MCF 10A (cell line): ENCODE measurements at regions of chr4 and their contacts with region 1.

Region 1: DNA sequence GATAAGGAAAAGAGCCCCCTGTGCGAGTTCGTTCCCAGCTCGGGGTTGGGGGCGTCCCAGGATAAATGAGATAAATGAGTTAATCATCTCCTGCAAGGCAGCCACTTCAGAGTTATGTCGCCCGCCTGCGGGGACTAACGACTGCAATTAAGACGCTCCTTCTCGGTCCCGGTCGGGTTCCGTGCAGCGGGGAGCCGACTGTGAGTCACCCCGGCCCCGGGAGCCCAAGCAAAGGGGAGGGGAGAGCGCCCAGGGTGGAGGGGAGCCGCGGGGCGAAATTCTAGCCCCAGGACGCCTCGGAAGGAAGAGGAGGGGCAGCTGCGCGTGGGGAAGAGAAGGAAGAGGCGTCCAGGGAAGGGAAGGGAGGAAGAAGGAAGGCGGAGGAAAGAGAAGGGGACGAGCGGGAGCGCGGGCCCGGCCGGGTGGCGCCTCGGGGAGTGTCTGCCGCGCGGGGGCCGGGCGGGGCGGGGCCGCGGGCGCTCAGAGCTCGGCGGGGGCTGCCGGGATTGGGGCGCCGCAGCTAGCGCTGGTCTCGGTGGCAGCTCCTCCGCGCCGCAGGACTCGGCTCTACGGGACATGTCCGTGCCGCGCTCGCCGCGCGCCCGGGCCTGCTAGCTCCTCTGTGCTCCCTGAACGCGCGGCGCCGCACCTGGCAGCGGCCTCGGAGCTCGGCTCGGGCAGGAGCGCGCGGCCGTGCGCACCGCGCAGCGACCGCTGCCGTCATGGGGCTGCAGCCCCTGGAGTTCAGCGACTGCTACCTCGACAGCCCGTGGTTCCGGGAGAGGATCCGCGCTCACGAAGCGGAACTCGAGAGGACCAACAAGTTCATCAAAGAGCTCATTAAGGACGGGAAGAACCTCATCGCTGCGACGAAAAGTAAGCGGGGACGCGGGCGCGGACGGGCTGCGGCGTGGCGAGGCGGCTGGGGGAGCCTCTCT is at the start of gene ARHGAP10:
- DNase-seq: peak; percentile 85
- H3K4me3 Mint-ChIP-seq: peak within 1 kb of the TSS; percentile 86
- H3K27ac Mint-ChIP-seq: peak within 1 kb of the TSS; percentile 50
- H3K4me1 Mint-ChIP-seq: peaks cover 40% of the 10 kb centered on the region
- H3K27me3 Mint-ChIP-seq: no peaks in the 10 kb centered on the region
- CTCF ChIP-seq: no peak
- total RNA-seq, gene ARHGAP10: 22.4 and 24.6 TPM in 2 replicates

Region 2: GRCh38 chr4:147425019-147425418 is 306.8 kb before region 1 on chr4:
- CTCF ChIA-PET with region 1: no interaction called
- POLR2A ChIA-PET with region 1: no interaction called
- intact Hi-C with region 1: no loop called
- DNase-seq: no peak
- H3K4me3 Mint-ChIP-seq: no peak overlapping the region
- H3K27ac Mint-ChIP-seq: no peak overlapping the region
- H3K4me1 Mint-ChIP-seq: peaks cover 10% of the 10 kb centered on the region
- H3K27me3 Mint-ChIP-seq: no peaks in the 10 kb centered on the region
- CTCF ChIP-seq: no peak

Region 3: DNA sequence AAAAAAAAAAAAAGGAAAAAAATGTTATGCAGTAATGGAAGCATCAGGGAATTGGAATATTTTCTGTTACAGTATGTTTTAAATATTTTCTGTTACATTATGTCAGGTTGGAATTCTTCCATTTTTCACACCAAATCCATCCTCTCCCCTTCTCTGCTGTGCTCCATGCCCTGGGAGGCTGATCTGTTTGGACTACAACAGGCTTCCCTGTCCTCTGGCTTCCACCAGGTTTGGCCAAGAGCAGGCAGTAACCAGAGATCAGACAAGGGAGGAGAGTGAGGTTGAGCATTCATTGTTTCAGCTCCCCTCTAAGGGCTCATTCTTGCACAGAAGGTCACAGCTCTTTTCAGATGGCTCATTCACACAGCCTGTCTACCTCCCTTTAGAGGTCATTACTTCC is 126.3 kb before region 1 on chr4:
- CTCF ChIA-PET with region 1: no interaction called
- POLR2A ChIA-PET with region 1: no interaction called
- intact Hi-C with region 1: no loop called
- DNase-seq: no peak
- H3K4me3 Mint-ChIP-seq: no peak overlapping the region
- H3K27ac Mint-ChIP-seq: no peak overlapping the region
- H3K4me1 Mint-ChIP-seq: no peaks in the 10 kb centered on the region
- H3K27me3 Mint-ChIP-seq: no peaks in the 10 kb centered on the region
- CTCF ChIP-seq: no peak

Region 4: DNA sequence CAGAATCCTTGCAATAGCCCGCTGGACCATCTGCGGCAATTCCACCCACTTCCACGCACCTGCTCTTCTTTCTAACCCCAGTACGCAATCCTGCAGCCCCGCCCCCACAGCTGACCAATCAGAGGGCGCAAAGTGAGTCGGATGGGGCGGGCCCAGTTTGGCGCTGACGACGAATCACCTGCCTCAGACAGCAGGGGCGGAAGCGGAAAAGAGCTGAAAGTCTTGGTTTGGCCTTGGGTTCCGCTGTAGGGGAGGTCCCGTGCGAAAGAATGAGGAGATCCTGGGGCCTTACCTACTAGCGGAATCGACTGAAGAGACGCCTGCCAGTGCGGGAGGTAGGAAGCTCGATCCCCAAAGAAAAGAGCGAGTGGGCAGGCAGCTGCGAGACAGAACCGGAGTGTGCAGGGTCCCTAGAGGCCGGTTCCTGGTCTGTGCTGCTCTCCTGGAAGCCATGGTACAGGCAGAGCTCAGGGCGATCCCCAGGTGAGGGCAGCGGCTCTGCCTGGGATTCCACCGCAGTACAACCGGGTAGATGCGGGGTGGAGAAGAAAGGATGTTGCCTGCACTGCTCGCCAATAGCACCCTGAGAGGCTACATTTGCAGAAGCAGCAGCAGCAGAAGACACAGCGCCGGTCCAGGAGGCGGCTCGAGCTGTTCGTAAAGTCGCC is 114.5 kb before region 1 on chr4 and contains the start of gene TMEM184C:
- CTCF ChIA-PET with region 1: no interaction called
- POLR2A ChIA-PET with region 1: interaction called, 12 read pairs
- intact Hi-C with region 1: no loop called
- DNase-seq: peak; percentile 98
- H3K4me3 Mint-ChIP-seq: peak within 1 kb of the TSS; percentile 82
- H3K27ac Mint-ChIP-seq: peak within 1 kb of the TSS; percentile 86
- H3K4me1 Mint-ChIP-seq: peaks cover 18% of the 10 kb centered on the region
- H3K27me3 Mint-ChIP-seq: no peaks in the 10 kb centered on the region
- CTCF ChIP-seq: no peak
- total RNA-seq, gene TMEM184C: 33.9 and 37.1 TPM in 2 replicates

Region 5: DNA sequence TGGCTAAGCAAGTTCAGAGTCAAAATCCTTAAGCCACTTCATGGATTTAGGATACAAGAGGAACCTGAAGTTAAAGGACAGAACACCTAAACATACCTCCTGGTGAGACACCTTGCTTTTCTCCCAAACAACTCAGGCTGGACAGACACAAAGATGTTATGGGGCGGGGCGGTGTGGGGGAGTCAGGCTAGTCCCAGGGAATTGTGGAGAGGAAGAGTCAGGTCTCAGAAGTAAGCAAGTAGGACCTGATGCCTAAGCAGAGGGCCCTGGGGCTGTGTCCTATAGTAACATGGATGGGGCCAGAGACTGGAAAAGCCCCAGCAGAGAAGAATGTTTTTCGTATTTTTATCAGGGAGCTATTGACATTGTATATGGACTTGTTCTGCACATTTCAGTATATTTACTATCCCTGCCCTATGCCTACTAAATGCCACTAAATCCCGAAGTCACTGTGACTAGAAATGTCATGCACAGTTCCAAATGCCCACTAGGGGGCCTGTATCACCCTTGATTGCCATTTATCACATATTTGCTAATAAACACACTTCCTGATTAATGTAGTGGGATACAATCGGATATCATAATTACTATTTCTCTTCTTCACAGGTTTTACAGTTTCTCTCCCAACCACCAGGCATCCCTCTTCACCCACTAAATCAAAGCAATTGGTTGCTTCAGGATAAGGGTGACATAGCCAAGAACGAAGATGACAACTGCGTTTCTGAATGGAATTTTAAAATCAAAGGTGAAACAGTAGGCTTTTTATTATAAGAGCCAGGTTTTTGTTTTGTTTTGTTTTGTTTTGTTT is 23.8 kb before region 1 on chr4:
- CTCF ChIA-PET with region 1: interaction called, 9 read pairs
- POLR2A ChIA-PET with region 1: interaction called, 21 read pairs
- intact Hi-C with region 1: loop called (anchors 2 kb)
- DNase-seq: peak; percentile 71
- H3K4me3 Mint-ChIP-seq: no peak overlapping the region
- H3K27ac Mint-ChIP-seq: no peak overlapping the region
- H3K4me1 Mint-ChIP-seq: peaks cover 12% of the 10 kb centered on the region
- H3K27me3 Mint-ChIP-seq: no peaks in the 10 kb centered on the region
- CTCF ChIP-seq: peak; percentile 76

Region 6: GRCh38 chr4:147755561-147756295 is 23.9 kb after region 1 on chr4:
- CTCF ChIA-PET with region 1: interaction called, 6 read pairs
- POLR2A ChIA-PET with region 1: interaction called, 16 read pairs
- intact Hi-C with region 1: no loop called
- DNase-seq: no peak
- H3K4me3 Mint-ChIP-seq: no peak overlapping the region
- H3K27ac Mint-ChIP-seq: peak overlapping the region; percentile 61
- H3K4me1 Mint-ChIP-seq: peaks cover 41% of the 10 kb centered on the region
- H3K27me3 Mint-ChIP-seq: no peaks in the 10 kb centered on the region
- CTCF ChIP-seq: no peak

Region 7: GRCh38 chr4:147822128-147822527 is 90.3 kb after region 1 on chr4:
- CTCF ChIA-PET with region 1: interaction called, 6 read pairs
- POLR2A ChIA-PET with region 1: interaction called, 54 read pairs
- intact Hi-C with region 1: no loop called
- DNase-seq: peak; percentile 99
- H3K4me3 Mint-ChIP-seq: peak overlapping the region; percentile 54
- H3K27ac Mint-ChIP-seq: peak overlapping the region; percentile 81
- H3K4me1 Mint-ChIP-seq: peaks cover 53% of the 10 kb centered on the region
- H3K27me3 Mint-ChIP-seq: no peaks in the 10 kb centered on the region
- CTCF ChIP-seq: no peak